ENCODE measurements at regions of chr13 and their contacts with region 1.

Region 1: GRCh38 chr13:43041369-43041921 is 18.1 kb downstream of the DNAJC15 start:
- DNase-seq: no peak
- ATAC-seq: no peak
- H3K4me3 Mint-ChIP-seq: no peak overlapping the region
- H3K27ac Mint-ChIP-seq: peak overlapping the region; percentile 17
- H3K4me1 Mint-ChIP-seq: peaks cover 72% of the 10 kb centered on the region
- H3K27me3 Mint-ChIP-seq: no peaks in the 10 kb centered on the region

Region 2: DNA sequence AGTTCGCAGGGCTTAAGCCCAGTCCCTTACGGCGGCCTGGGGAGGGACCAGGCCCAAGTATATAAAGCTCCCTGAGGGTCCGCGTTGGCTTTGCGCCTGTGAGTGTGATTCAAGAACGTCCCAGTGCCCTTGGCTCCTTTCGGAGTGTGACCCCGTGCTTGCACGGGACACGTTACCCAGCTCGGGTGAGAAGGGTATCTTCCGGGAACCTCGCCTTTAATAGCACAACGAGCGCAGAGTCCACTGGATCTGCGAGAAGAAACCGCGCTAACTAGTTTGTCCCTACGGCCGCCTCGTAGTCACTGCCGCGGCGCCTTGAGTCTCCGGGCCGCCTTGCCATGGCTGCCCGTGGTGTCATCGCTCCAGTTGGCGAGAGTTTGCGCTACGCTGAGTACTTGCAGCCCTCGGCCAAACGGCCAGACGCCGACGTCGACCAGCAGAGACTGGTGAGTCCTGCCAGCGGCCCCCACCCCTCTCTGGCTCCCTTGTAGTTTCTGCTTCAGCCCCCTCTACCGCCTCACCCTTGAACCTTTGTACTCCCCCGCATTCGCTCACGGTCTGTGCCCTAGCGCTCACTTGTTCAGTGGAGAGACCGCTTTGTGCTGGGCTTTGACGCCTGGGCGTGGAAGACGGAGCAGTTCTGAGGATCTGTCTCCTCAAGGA is 18.0 kb before region 1 on chr13 and contains the start of gene DNAJC15:
- CTCF ChIA-PET with region 1: interaction called, 3 read pairs
- POLR2A ChIA-PET with region 1: interaction called, 4 read pairs
- intact Hi-C with region 1: loop called in 1 of 2 experiments (anchors 1 kb)
- DNase-seq: peak; percentile 90
- ATAC-seq: peak; percentile 95
- H3K4me3 Mint-ChIP-seq: peak within 1 kb of the TSS; percentile 99
- H3K27ac Mint-ChIP-seq: peak within 1 kb of the TSS; percentile 91
- H3K4me1 Mint-ChIP-seq: peaks cover 28% of the 10 kb centered on the region
- H3K27me3 Mint-ChIP-seq: no peaks in the 10 kb centered on the region
- total RNA-seq, gene DNAJC15: 13.0 to 20.8 TPM

Region 3: DNA sequence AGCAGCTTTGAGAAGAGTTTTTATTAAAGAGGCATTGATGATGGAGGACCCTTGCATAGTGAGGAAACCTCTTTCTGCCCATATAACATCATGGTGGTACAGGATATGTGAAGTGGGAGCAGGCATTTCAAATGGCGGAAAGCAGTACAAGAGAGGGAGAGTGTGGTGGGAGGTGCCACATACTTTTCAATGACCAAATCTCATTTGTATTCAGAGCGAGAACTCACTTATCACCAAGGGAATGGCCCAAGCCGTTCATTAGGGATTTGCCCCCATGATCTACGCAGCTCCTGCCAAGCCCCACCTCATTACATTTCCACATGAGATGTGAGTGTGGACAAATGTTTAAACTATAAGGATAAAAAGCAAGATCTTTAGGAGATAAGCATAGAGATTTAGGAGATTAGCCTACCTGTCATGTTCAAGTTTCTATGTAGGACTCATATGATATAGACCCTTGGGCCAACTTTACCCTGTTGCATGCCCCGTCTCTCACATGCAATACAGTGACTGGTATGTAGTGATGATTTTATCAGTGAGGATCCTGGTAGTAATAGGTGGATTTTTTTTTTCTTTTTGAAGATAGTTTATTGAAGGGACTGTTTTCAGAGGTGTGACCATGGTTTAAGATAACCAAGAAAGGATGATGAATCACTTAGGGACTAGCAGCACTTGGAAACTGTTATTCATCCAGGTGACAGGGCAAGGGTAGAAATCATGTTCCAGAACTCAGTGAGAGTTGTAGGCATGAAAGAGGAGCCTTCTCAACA is 20.2 kb after region 1 on chr13:
- CTCF ChIA-PET with region 1: interaction called, 3 read pairs
- POLR2A ChIA-PET with region 1: no interaction called
- intact Hi-C with region 1: loop called in 1 of 2 experiments (anchors 1 kb)
- DNase-seq: peak; percentile 36
- ATAC-seq: peak; percentile 84
- H3K4me3 Mint-ChIP-seq: no peak overlapping the region
- H3K27ac Mint-ChIP-seq: peak overlapping the region; percentile 70
- H3K4me1 Mint-ChIP-seq: peaks cover 57% of the 10 kb centered on the region
- H3K27me3 Mint-ChIP-seq: no peaks in the 10 kb centered on the region

Region 4: GRCh38 chr13:43626994-43627393 is 585.5 kb after region 1 on chr13:
- CTCF ChIA-PET with region 1: no interaction called
- POLR2A ChIA-PET with region 1: no interaction called
- intact Hi-C with region 1: no loop called
- DNase-seq: no peak
- ATAC-seq: no peak
- H3K4me3 Mint-ChIP-seq: no peak overlapping the region
- H3K27ac Mint-ChIP-seq: no peak overlapping the region
- H3K4me1 Mint-ChIP-seq: no peaks in the 10 kb centered on the region
- H3K27me3 Mint-ChIP-seq: peaks cover 18% of the 10 kb centered on the region

Measured in activated CD4-positive, alpha-beta T cell treated with anti-CD3 and anti-CD28 coated beads for 36 hours (primary cell).